CD8-positive, alpha-beta T cell (primary cell): ENCODE measurements at regions of chr16 and their contacts with region 1.

Region 1: GRCh38 chr16:25257504-25257955 is at the start of gene ZKSCAN2:
- DNase-seq: peak; percentile 57 to 90 (median 77)
- ATAC-seq: peak; percentile 79
- H3K4me3 ChIP-seq: peak within 1 kb of the TSS; percentile 68 to 86
- H3K4me3 Mint-ChIP-seq: peak within 1 kb of the TSS; percentile 96
- H3K27ac ChIP-seq: peak within 1 kb of the TSS; percentile 79 to 94
- H3K27ac Mint-ChIP-seq: peak within 1 kb of the TSS; percentile 95
- H3K4me1 ChIP-seq: peaks cover 38% of the 10 kb centered on the region
- H3K4me1 Mint-ChIP-seq: peaks cover 62% of the 10 kb centered on the region
- H3K27me3 ChIP-seq: no peaks in the 10 kb centered on the region
- H3K27me3 Mint-ChIP-seq: no peaks in the 10 kb centered on the region
- CTCF ChIP-seq: no peak
- total RNA-seq, gene ZKSCAN2: 9.3 to 9.4 TPM

Region 2: DNA sequence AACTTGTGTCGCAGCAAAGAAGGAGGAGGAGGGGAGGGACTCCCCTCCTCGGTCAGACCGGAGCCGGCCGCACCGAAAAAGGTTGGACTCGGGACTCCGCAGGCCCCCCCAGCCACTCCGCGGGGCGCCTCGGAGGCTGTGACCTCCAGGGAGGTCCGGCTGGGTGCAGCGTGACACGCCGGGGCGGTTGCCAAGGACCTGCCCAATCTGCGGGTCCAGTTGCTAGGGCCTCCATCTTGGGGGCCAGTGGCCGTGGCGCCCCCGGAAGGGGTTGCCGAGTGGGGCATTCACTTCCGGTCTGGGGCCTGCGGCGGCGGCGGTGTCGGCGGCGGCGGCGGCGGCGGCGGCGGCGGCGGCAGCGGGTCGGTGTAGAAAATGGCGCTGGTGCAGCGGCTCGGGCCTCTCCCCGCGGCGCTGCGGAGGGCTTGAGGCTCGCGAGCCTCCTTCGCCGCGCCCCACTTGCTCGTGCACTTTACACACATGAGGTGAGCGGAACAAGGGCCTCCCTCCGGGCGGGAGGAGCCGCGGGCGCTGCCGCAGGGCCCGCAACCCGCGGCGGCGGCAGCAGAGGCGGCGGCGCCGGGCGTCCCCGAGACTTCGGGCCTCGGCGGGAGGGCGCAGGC is 528.1 kb before region 1 on chr16 and contains the start of gene TNRC6A:
- CTCF ChIA-PET with region 1: no interaction called
- POLR2A ChIA-PET with region 1: no interaction called
- intact Hi-C with region 1: loop called in 1 of 2 experiments (anchors 10 kb)
- DNase-seq: peak; percentile 61 to 92 (median 76)
- ATAC-seq: peak; percentile 78
- H3K4me3 ChIP-seq: peak within 1 kb of the TSS; percentile 93 to 97
- H3K4me3 Mint-ChIP-seq: peak within 1 kb of the TSS; percentile 95
- H3K27ac ChIP-seq: peak within 1 kb of the TSS; percentile 97 to 98
- H3K27ac Mint-ChIP-seq: peak within 1 kb of the TSS; percentile 98
- H3K4me1 ChIP-seq: peaks cover 40% of the 10 kb centered on the region
- H3K4me1 Mint-ChIP-seq: peaks cover 45% of the 10 kb centered on the region
- H3K27me3 ChIP-seq: no peaks in the 10 kb centered on the region
- H3K27me3 Mint-ChIP-seq: no peaks in the 10 kb centered on the region
- CTCF ChIP-seq: no peak
- total RNA-seq, gene TNRC6A: 65.2 to 73.4 TPM

Region 3: GRCh38 chr16:24737916-24738594 is 519.5 kb before region 1 on chr16:
- CTCF ChIA-PET with region 1: no interaction called
- POLR2A ChIA-PET with region 1: no interaction called
- intact Hi-C with region 1: loop called (anchors 2 to 10 kb)
- DNase-seq: no peak
- ATAC-seq: no peak
- H3K4me3 ChIP-seq: no peak overlapping the region
- H3K4me3 Mint-ChIP-seq: peak overlapping the region; percentile 11
- H3K27ac ChIP-seq: no peak overlapping the region
- H3K27ac Mint-ChIP-seq: no peak overlapping the region
- H3K4me1 ChIP-seq: peaks cover 42% of the 10 kb centered on the region
- H3K4me1 Mint-ChIP-seq: peaks cover 96% of the 10 kb centered on the region
- H3K27me3 ChIP-seq: no peaks in the 10 kb centered on the region
- H3K27me3 Mint-ChIP-seq: no peaks in the 10 kb centered on the region
- CTCF ChIP-seq: no peak

Region 4: DNA sequence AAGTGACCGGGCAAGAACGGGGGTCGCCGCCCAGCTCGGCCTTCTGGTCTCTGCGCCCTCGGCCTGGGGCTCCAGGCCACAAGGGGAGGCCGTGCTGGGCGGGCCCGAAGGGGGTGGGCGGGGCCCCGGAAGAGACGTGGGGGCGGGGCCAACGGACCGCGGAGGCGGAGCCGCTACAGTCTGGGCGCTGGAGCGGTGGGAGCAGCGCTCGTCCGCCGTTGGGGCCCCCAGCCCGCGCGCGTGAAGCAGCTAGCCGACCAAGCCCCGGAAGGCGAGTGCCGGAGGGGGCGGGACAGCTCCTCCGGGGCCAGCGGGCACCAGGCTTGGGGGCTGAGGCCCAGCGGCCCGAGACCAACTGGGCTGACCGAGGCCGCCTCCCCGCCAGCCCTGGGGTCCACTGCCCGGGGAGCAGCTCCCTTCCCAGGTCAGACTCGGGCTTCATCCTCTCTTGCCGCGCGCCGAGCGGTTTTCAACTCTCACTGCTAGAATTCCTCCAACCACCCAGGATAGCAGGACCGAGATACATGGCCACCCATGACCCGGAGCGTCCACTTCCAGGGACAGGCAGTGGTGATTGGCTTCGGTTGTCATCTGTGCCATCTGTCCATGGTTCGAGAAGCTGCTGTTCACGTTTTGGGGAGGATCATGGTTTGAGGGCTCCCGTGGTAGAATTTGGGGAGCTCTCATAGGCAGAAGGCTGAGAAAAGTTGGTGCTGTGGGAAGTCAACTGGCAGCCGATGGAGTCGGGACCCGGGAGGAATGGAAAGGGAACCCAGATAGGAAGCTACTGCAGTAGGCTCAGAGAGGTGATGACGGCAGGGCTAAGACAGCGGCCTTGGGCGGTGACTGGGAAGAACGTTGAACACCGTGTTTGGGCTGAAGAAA is 190.5 kb before region 1 on chr16:
- CTCF ChIA-PET with region 1: no interaction called
- POLR2A ChIA-PET with region 1: no interaction called
- intact Hi-C with region 1: loop called (anchors 1 to 10 kb)
- DNase-seq: peak; percentile 63 to 92 (median 82)
- ATAC-seq: peak; percentile 97
- H3K4me3 ChIP-seq: peak overlapping the region; percentile 65 to 70
- H3K4me3 Mint-ChIP-seq: peak overlapping the region; percentile 95
- H3K27ac ChIP-seq: peak overlapping the region; percentile 61 to 86
- H3K27ac Mint-ChIP-seq: peak overlapping the region; percentile 97
- H3K4me1 ChIP-seq: peaks cover 42% of the 10 kb centered on the region
- H3K4me1 Mint-ChIP-seq: peaks cover 59% of the 10 kb centered on the region
- H3K27me3 ChIP-seq: no peaks in the 10 kb centered on the region
- H3K27me3 Mint-ChIP-seq: no peaks in the 10 kb centered on the region
- CTCF ChIP-seq: no peak